Prostate gland (tissue), 2 donors: ENCODE measurements at regions of chr11 and their contacts with region 1.

Region 1: DNA sequence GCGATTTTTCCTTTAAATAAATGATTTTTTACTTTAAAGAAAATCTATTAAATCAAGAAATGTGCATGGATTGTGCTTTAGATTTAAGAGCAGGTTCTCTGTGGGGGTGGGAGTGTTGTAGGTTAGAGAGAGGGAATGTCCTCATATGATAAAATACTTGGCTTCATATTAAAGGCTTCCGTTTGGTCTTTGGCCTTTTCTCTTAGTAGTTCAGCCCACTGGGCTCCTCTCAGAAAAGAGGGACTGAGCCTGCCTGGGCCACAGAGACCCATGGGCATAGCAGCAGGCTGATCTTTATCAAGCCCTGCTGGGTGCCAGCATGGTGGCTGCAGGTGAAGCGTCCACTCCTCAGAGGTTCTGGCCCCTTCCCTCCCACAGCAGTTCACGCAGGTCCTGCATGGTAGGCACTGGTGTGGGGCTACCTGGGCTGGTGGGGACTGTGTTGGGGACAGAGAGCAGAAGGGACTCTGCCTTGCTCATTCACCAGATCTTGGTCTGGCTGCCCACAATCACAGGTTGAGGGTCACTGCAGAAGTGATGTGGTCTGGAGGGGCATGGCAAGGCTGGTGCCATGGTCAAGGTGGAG is 4.3 kb downstream of the PANX1 start:
- DNase-seq: no peak
- H3K4me3 ChIP-seq: no peak overlapping the region
- H3K27ac ChIP-seq: no peak overlapping the region
- H3K4me1 ChIP-seq: peaks cover 6% of the 10 kb centered on the region
- H3K27me3 ChIP-seq: no peaks in the 10 kb centered on the region
- CTCF ChIP-seq: no peak
- POLR2A ChIP-seq: no peak

Region 2: DNA sequence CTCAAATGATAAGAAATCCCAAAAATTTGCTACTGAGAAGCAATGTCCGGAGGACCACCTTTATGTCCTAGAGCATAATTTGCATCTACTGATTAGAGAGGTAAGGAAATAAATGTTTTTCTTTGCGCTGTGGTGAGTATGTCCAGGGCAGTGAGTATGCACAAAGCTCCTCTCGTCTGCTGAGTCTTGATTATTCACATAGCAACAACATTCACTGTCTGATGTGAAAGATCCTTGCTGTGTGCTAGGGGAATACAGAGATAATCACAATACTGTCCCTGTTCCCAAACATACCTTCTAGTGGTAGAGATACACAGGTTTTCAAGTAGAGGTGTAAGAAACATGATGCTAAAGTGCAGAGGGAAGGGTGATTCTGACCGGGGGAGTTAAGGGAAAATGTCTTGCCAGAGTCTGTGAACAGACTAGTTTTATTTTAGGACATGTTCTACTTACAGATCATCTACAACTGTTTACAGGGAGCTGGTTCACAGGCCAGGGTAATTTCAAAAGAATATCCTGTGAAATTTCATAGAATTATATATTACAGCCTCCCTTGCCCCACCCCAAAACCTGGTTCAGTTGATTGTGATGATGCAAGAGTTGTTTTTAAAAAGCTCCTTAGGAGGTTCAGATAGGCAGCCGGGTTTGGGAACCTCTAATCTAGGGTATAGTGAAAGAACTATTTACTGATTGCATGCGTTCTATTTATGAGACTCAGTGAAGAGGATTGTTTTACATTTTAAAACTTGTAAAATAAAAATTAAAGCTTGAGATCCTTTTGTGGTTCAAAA is 336.3 kb before region 1 on chr11:
- intact Hi-C with region 1: no loop called
- DNase-seq: no peak
- H3K4me3 ChIP-seq: no peak overlapping the region
- H3K27ac ChIP-seq: no peak overlapping the region
- H3K4me1 ChIP-seq: no peaks in the 10 kb centered on the region
- H3K27me3 ChIP-seq: no peaks in the 10 kb centered on the region
- CTCF ChIP-seq: no peak
- POLR2A ChIP-seq: no peak

Region 3: GRCh38 chr11:94046796-94047195 is 86.1 kb before region 1 on chr11:
- intact Hi-C with region 1: no loop called
- DNase-seq: no peak
- H3K4me3 ChIP-seq: no peak overlapping the region
- H3K27ac ChIP-seq: no peak overlapping the region
- H3K4me1 ChIP-seq: no peaks in the 10 kb centered on the region
- H3K27me3 ChIP-seq: no peaks in the 10 kb centered on the region
- CTCF ChIP-seq: no peak
- POLR2A ChIP-seq: no peak

Region 4: DNA sequence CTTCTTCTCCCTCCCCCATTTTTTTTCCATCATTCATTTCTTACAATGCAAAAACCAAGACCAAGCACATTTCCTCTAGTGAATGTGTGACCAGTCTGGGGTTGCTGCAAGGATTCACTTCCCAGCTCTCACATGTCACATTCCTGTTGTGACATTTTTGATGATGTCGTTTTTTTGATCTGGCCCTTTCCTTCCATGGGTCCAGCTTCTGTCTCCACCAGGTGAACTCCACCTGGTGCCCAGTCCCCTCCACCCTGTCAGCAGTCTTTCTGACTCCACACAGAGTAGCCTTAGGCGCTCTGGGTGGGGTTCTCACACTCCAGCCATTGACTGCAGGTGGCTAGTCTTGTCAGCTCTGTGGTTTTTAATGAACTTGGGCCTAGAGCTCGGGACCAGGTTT is 11.3 kb after region 1 on chr11:
- intact Hi-C with region 1: loop called (anchors 1 kb)
- DNase-seq: no peak
- H3K4me3 ChIP-seq: no peak overlapping the region
- H3K27ac ChIP-seq: no peak overlapping the region
- H3K4me1 ChIP-seq: no peaks in the 10 kb centered on the region
- H3K27me3 ChIP-seq: no peaks in the 10 kb centered on the region
- CTCF ChIP-seq: no peak
- POLR2A ChIP-seq: no peak

Region 5: GRCh38 chr11:94254214-94254613 is 121.3 kb after region 1 on chr11:
- intact Hi-C with region 1: no loop called
- DNase-seq: no peak
- H3K4me3 ChIP-seq: no peak overlapping the region
- H3K27ac ChIP-seq: no peak overlapping the region
- H3K4me1 ChIP-seq: no peaks in the 10 kb centered on the region
- H3K27me3 ChIP-seq: no peaks in the 10 kb centered on the region
- CTCF ChIP-seq: no peak
- POLR2A ChIP-seq: no peak

Region 6: DNA sequence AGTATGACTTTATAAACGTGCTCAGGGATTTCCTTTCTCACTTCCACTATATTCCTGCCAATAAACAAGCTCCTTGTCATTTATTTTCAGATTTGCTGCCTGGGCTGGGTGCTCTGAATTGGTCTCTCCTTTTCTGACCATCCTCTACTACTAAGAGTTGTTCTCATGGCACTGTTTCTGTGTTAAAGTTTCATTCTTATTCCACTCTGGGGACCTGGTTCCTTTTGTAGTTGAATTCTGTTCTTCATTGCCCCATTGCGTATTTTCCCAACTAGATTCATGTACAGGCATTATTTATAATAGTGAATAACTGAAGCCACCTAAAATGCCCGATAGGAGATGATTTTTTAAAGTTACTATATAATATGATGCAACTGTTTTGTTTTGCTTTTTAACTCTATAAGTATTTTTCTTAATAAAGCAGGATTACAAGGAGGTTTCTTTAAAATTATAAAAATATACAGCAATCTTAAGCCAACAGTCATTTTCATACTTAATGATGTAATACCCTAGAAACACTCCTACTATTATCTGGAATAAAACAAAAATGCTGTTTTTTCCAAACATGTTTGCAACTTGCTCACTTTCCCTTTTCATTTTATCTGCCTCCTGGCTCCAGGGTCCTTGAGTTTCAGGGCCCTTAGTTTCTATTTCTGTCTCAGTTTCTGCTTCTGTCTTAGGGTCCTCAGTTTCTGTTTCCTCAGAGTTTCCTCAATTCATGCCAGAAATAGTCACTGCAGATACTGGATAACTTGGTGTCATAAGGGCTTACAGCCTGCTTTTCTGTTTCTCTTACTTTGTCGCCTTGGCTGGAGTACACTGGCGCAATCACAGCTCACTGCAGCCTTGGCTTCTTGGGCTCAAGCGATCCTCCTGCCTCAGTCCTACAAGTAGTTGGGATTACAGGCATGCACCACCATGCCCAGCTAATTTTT is 401.0 kb after region 1 on chr11:
- intact Hi-C with region 1: no loop called
- DNase-seq: no peak
- H3K4me3 ChIP-seq: no peak overlapping the region
- H3K27ac ChIP-seq: no peak overlapping the region
- H3K4me1 ChIP-seq: no peaks in the 10 kb centered on the region
- H3K27me3 ChIP-seq: no peaks in the 10 kb centered on the region
- CTCF ChIP-seq: no peak
- POLR2A ChIP-seq: no peak